Aorta (tissue), 5 donors: ENCODE measurements at regions of chr17 and their contacts with region 1.

Region 1: DNA sequence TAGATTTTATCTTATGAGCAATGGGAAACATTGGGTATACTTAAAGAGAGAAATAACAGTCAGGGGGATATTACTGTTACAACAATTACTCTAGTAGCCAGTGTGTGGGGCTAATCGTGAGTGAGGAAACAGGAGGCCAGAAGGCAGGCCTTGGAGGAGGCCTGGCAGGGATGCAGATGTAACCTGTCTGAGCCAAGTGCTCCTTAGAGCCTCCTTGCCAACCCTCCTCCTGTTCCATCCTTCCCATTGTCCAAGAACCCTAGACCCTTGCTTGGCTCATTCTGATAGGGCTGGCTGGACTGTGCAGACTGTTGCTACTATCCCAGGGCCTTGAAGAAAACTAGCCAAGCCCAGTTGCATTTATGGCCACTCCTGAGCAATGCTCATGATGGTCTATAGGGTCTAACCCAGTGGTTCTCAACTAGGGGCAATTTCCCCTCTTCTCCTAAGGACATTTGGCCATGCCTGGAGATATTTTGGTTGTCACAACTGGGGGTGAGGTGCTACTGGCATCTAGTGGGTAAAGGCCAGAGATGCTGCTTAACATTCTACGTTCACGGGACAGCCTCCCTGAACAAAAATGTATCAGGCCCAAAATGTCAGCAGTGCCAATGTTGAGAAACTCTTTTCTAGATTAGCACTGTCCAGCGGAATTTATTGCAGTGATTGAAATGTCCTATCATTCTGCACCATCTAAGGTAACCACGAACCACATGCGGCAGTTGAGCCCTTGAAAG is 24.4 kb upstream of the WSCD1 start:
- DNase-seq: no peak
- ATAC-seq: no peak
- H3K4me3 ChIP-seq: no peak overlapping the region
- H3K27ac ChIP-seq: no peak overlapping the region
- H3K4me1 ChIP-seq: no peaks in the 10 kb centered on the region
- H3K27me3 ChIP-seq: no peaks in the 10 kb centered on the region

Region 2: GRCh38 chr17:5592382-5592781 is 453.4 kb before region 1 on chr17:
- intact Hi-C with region 1: loop called in 1 of 2 experiments (anchors 10 kb)
- DNase-seq: no peak
- ATAC-seq: peak; percentile 27
- H3K4me3 ChIP-seq: no peak overlapping the region
- H3K27ac ChIP-seq: no peak overlapping the region
- H3K4me1 ChIP-seq: no peaks in the 10 kb centered on the region
- H3K27me3 ChIP-seq: no peaks in the 10 kb centered on the region

Region 3: GRCh38 chr17:6212766-6213165 is 167.0 kb after region 1 on chr17:
- intact Hi-C with region 1: no loop called
- DNase-seq: no peak
- ATAC-seq: no peak
- H3K4me3 ChIP-seq: no peak overlapping the region
- H3K27ac ChIP-seq: no peak overlapping the region
- H3K4me1 ChIP-seq: no peaks in the 10 kb centered on the region
- H3K27me3 ChIP-seq: no peaks in the 10 kb centered on the region